ENCODE measurements at regions of chr2 and their contacts with region 1.

Region 1: GRCh38 chr2:86518481-86518880 is 44.8 kb downstream of the CHMP3 start:
- DNase-seq: peak; percentile 1 to 71 (median 50)
- ATAC-seq: peak; percentile 81
- H3K4me3 ChIP-seq: no peak overlapping the region
- H3K4me3 Mint-ChIP-seq: no peak overlapping the region
- H3K27ac ChIP-seq: no peak overlapping the region
- H3K27ac Mint-ChIP-seq: no peak overlapping the region
- H3K4me1 ChIP-seq: peaks cover 4% of the 10 kb centered on the region
- H3K4me1 Mint-ChIP-seq: peaks cover 10% of the 10 kb centered on the region
- H3K27me3 ChIP-seq: no peaks in the 10 kb centered on the region
- H3K27me3 Mint-ChIP-seq: no peaks in the 10 kb centered on the region
- CTCF ChIP-seq: peak; percentile 74

Region 2: GRCh38 chr2:86417961-86418360 is 100.5 kb before region 1 on chr2:
- CTCF ChIA-PET with region 1: no interaction called
- POLR2A ChIA-PET with region 1: no interaction called
- intact Hi-C with region 1: no loop called
- DNase-seq: no peak
- ATAC-seq: no peak
- H3K4me3 ChIP-seq: no peak overlapping the region
- H3K4me3 Mint-ChIP-seq: no peak overlapping the region
- H3K27ac ChIP-seq: no peak overlapping the region
- H3K27ac Mint-ChIP-seq: no peak overlapping the region
- H3K4me1 ChIP-seq: no peaks in the 10 kb centered on the region
- H3K4me1 Mint-ChIP-seq: peaks cover 6% of the 10 kb centered on the region
- H3K27me3 ChIP-seq: peaks cover 2 to 7% of the 10 kb centered on the region in 2 experiments
- H3K27me3 Mint-ChIP-seq: peaks cover 30% of the 10 kb centered on the region
- CTCF ChIP-seq: no peak

Region 3: DNA sequence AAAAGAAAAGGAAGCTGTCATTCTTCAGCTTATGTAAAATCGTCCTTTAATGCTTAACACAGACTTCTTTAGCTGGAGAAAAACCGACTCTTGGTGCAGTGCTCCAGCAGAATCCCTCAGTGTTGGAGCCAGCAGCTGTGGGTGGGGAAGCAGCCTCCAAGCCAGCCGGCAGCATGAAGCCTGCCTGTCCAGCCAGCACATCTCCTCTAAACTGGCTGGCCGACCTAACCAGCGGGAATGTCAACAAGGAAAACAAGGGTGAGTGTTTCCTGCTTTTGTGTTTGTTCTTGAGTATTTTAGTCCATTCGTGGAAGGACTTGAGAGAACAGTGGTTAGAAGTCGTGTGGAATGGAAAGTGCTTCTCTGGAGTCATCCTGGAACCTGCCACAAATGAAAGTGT is 38.4 kb before region 1 on chr2:
- CTCF ChIA-PET with region 1: no interaction called
- POLR2A ChIA-PET with region 1: no interaction called
- intact Hi-C with region 1: no loop called
- DNase-seq: no peak
- ATAC-seq: no peak
- H3K4me3 ChIP-seq: no peak overlapping the region
- H3K4me3 Mint-ChIP-seq: no peak overlapping the region
- H3K27ac ChIP-seq: no peak overlapping the region
- H3K27ac Mint-ChIP-seq: peak overlapping the region; percentile 3
- H3K4me1 ChIP-seq: no peaks in the 10 kb centered on the region
- H3K4me1 Mint-ChIP-seq: peaks cover 11% of the 10 kb centered on the region
- H3K27me3 ChIP-seq: no peaks in the 10 kb centered on the region
- H3K27me3 Mint-ChIP-seq: no peaks in the 10 kb centered on the region
- CTCF ChIP-seq: no peak

Region 4: DNA sequence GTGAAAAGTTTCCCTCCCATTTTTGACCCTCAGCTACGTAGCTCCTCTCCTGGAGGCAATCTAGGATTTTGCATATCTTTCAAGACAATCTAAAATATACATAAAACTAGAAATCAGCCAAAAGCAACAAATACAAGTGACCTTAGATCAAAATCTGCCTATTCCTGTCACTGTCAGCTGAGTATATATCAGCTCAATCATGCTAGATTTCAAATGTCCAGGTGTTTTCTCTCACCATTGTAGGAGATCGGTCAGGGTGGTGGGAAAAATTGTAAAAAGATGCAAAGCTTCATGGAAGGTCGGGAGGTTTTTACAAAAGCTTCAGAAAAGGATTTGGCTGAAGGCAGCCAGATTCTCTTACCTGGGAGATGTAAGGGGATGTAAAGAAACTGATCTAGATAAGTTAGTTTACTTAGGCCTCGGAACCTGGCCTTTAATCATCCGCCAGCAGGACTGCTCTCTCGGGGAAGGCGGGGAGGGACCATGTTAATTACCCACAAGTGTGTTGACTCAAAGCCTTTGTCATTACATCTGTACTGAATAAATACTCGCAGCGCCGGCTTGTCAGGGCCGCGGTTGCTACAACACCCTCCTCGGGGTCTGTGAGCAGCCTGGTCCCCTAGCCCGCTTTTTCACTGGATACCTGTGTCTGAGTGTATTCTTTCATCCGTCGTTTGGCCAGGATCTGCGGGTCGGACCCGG is 37.9 kb after region 1 on chr2:
- CTCF ChIA-PET with region 1: interaction called, 5 read pairs
- POLR2A ChIA-PET with region 1: no interaction called
- intact Hi-C with region 1: loop called in 1 of 2 experiments (anchors 5 kb)
- DNase-seq: no peak
- ATAC-seq: no peak
- H3K4me3 ChIP-seq: no peak overlapping the region
- H3K4me3 Mint-ChIP-seq: no peak overlapping the region
- H3K27ac ChIP-seq: no peak overlapping the region
- H3K27ac Mint-ChIP-seq: no peak overlapping the region
- H3K4me1 ChIP-seq: peaks cover 47% of the 10 kb centered on the region
- H3K4me1 Mint-ChIP-seq: peaks cover 61% of the 10 kb centered on the region
- H3K27me3 ChIP-seq: no peaks in the 10 kb centered on the region
- H3K27me3 Mint-ChIP-seq: no peaks in the 10 kb centered on the region
- CTCF ChIP-seq: no peak

Region 5: GRCh38 chr2:86608832-86609410 is 90.4 kb after region 1 on chr2:
- CTCF ChIA-PET with region 1: interaction called, 7 read pairs
- POLR2A ChIA-PET with region 1: no interaction called
- intact Hi-C with region 1: loop called in 1 of 2 experiments (anchors 5 kb)
- DNase-seq: no peak
- ATAC-seq: no peak
- H3K4me3 ChIP-seq: no peak overlapping the region
- H3K4me3 Mint-ChIP-seq: no peak overlapping the region
- H3K27ac ChIP-seq: no peak overlapping the region
- H3K27ac Mint-ChIP-seq: peak overlapping the region; percentile 68
- H3K4me1 ChIP-seq: no peaks in the 10 kb centered on the region
- H3K4me1 Mint-ChIP-seq: peaks cover 27% of the 10 kb centered on the region
- H3K27me3 ChIP-seq: no peaks in the 10 kb centered on the region
- H3K27me3 Mint-ChIP-seq: no peaks in the 10 kb centered on the region
- CTCF ChIP-seq: no peak

Region 6: GRCh38 chr2:86675511-86676015 is 157.1 kb after region 1 on chr2:
- CTCF ChIA-PET with region 1: interaction called, 21 read pairs
- POLR2A ChIA-PET with region 1: no interaction called
- intact Hi-C with region 1: loop called in 1 of 2 experiments (anchors 1 kb)
- DNase-seq: peak in 2 of 9 experiments; percentile 25 to 41
- ATAC-seq: no peak
- H3K4me3 ChIP-seq: no peak overlapping the region
- H3K4me3 Mint-ChIP-seq: no peak overlapping the region
- H3K27ac ChIP-seq: no peak overlapping the region
- H3K27ac Mint-ChIP-seq: no peak overlapping the region
- H3K4me1 ChIP-seq: no peaks in the 10 kb centered on the region
- H3K4me1 Mint-ChIP-seq: no peaks in the 10 kb centered on the region
- H3K27me3 ChIP-seq: no peaks in the 10 kb centered on the region
- H3K27me3 Mint-ChIP-seq: no peaks in the 10 kb centered on the region
- CTCF ChIP-seq: no peak

Region 7: DNA sequence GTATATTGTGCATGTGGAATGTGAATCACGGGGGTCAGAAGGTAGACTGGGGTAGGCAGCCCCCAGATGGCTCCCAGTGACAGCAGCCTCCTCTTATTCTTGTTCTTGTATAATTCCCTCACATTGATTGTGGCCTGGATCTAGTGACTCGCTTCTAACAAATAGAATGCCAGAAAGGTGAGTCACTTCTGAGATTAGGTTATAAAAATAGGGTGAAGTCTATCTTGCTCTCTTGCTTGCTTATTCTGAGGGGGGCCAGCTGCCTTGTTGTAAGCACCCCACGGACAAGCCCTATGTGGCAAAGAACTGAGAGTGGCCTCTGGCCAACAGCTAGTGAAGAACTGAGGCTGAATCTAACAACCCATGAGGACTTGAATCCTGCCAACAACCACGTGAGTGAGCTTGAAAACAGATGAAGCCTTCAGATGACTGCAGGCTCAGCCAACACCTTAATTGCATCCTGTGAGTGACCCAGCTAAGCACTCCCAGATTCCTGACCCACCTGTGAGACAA is 186.0 kb after region 1 on chr2:
- CTCF ChIA-PET with region 1: interaction called, 12 read pairs
- POLR2A ChIA-PET with region 1: no interaction called
- intact Hi-C with region 1: no loop called
- DNase-seq: no peak
- ATAC-seq: no peak
- H3K4me3 ChIP-seq: no peak overlapping the region
- H3K4me3 Mint-ChIP-seq: no peak overlapping the region
- H3K27ac ChIP-seq: no peak overlapping the region
- H3K27ac Mint-ChIP-seq: no peak overlapping the region
- H3K4me1 ChIP-seq: no peaks in the 10 kb centered on the region
- H3K4me1 Mint-ChIP-seq: no peaks in the 10 kb centered on the region
- H3K27me3 ChIP-seq: no peaks in the 10 kb centered on the region
- H3K27me3 Mint-ChIP-seq: peaks cover 2% of the 10 kb centered on the region
- CTCF ChIP-seq: no peak